RWPE1 (cell line): ENCODE measurements at regions of chr1 and their contacts with region 1.

Region 1: GRCh38 chr1:33735621-33736020 is 128.3 kb upstream of the HMGB4 start:
- DNase-seq: peak; percentile 11
- H3K27ac ChIP-seq: no peak overlapping the region
- CTCF ChIP-seq: no peak

Region 2: GRCh38 chr1:33244143-33244820 is 491.3 kb before region 1 on chr1:
- CTCF ChIA-PET with region 1: no interaction called
- POLR2A ChIA-PET with region 1: no interaction called
- DNase-seq: peak; percentile 58
- H3K27ac ChIP-seq: no peak overlapping the region
- CTCF ChIP-seq: no peak

Region 3: DNA sequence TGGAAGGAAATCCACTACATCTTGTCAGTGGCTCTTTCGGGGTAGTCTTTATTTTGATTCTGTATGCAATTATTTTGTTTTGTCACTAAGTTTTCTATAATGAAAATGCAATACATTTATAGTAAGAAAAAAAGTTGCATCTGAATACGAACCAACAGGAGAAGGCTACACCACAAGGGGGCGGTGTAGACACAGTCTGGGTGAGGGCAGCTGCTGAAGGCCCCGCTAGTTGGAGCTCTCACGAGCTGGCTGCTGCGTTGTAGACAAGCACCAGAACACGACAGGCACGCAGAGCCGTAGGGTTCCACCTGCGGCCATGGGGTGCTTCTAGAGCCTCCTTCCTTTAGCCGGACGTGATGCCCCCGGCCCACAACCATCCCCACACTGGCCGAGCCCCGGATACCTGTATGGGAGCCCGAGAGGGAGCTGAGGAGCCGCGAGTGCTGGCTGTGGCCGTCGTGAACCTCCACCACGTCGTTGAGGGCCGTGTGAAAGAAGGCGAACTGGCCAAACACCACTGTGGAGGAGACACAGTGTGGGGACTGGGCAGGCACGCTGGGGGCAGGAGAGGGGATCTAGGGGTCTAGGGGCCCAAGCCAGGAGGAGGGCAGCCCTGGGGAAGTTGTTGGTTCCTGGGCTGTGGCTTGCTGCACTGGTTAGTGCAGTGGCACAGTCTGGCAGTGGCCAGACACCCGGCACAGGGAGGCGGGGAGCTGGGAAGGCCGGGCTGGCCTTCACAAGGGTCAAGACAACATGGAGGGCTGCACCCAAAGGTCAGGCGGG is 102.4 kb before region 1 on chr1:
- CTCF ChIA-PET with region 1: interaction called, 12 read pairs
- POLR2A ChIA-PET with region 1: no interaction called
- DNase-seq: peak; percentile 71
- H3K27ac ChIP-seq: no peak overlapping the region
- CTCF ChIP-seq: peak; percentile 88